Aorta (tissue), 5 donors: ENCODE measurements at regions of chr13 and their contacts with region 1.

Region 1: DNA sequence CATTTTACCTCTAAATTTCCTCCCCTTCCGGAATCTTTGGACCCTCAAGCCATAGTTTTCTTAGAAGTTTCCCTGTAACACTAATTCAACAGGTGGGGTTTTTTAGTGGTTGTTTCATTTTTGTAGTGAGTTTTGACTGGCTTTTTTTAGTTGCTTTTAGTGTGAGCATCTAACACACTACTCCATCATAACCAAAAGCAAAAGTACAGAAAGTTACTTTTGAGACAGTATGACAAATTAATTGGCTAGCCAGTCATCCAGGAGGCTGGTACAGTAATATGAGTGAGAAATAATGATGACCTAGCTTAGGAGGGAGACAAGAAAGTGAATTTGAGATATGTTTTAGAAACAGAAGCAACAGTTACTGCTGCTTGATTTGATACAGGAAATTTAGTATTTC is 71.5 kb downstream of the DNAJC15 start:
- DNase-seq: no peak
- ATAC-seq: no peak
- H3K4me3 ChIP-seq: no peak overlapping the region
- H3K27ac ChIP-seq: no peak overlapping the region
- H3K4me1 ChIP-seq: peaks cover 2 to 5% of the 10 kb centered on the region in 2 donors
- H3K27me3 ChIP-seq: no peaks in the 10 kb centered on the region

Region 2: GRCh38 chr13:43258761-43259160 is 163.9 kb after region 1 on chr13:
- intact Hi-C with region 1: no loop called
- DNase-seq: no peak
- ATAC-seq: no peak
- H3K4me3 ChIP-seq: no peak overlapping the region
- H3K27ac ChIP-seq: no peak overlapping the region
- H3K4me1 ChIP-seq: no peaks in the 10 kb centered on the region
- H3K27me3 ChIP-seq: no peaks in the 10 kb centered on the region

Region 3: GRCh38 chr13:43374621-43375020 is 279.7 kb after region 1 on chr13:
- intact Hi-C with region 1: loop called in 1 of 2 experiments (anchors 5 kb)
- DNase-seq: no peak
- ATAC-seq: no peak
- H3K4me3 ChIP-seq: no peak overlapping the region
- H3K27ac ChIP-seq: no peak overlapping the region
- H3K4me1 ChIP-seq: peaks cover 0 to 10% of the 10 kb centered on the region in 2 donors
- H3K27me3 ChIP-seq: no peaks in the 10 kb centered on the region